ENCODE measurements at regions of chr2 and their contacts with region 1.

Region 1: DNA sequence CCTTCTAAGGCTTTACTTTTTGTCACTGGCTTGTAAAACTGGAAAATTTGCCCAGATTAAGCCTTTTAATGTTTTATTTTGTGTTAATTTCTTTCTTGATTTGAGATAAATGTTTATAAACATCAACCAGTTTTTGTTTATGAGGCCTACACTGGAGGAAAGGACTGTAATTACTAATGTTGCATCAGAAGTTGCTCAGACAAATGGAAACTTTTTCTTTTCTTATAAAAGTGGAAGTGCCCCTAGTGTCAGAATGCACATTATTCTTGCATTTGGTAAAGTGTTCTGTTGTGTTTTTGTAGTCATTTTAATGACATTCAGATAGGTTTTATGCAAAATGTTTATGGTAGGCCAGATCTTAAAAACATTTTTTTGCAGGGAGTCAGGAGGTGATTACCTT is 25.3 kb downstream of the LCLAT1 start:
- DNase-seq: no peak
- ATAC-seq: no peak
- H3K4me3 ChIP-seq: no peak overlapping the region
- H3K27ac ChIP-seq: no peak overlapping the region
- H3K4me1 ChIP-seq: peaks cover 0 to 9% of the 10 kb centered on the region in 2 donors
- H3K27me3 ChIP-seq: no peaks in the 10 kb centered on the region
- CTCF ChIP-seq: no peak
- POLR2A ChIP-seq: no peak

Region 2: DNA sequence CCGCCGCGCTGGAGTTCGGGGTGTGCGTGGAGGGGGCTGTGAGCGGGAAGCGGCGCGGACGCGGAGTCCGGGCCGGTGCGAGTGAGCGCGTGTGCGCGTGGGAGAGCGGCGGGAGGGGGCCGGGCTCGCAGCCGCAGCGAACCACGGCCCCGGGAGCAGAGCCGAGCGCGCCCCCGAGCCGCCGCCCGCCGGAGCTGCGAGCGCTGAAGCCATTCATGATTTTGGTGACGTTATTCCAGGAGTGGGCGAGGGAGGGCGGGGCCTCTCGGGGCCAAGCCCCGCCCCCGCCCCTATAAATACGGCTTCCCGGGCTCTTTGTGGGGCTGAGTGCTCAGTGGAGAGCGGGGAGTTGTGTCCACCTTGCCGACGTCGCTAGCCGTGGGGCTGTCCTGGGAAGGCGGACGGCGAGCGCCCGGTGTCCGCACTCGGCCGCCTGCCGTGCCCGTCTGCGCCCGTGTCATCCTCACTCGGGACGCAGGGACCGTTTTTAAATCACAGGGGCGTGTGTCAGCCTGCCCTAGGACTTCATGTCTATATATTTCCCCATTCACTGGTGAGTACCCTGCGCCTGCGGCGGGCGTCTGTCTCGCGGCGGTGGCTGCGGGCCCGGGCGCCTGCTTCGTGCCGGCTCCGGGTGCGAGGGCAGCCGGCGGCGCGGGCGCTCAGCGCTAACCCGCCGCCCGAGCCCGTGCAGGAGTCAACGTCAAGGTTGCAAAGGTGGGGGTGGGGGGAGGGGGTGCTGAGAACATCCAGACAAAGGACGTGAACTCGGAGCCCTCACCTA is 240.9 kb before region 1 on chr2 and contains the start of gene LBH:
- in situ Hi-C with region 1: loop called in 1 of 4 experiments (anchors 25 kb)
- intact Hi-C with region 1: no loop called
- DNase-seq: peak; percentile 31 to 64
- ATAC-seq: peak; percentile 69 to 70
- H3K4me3 ChIP-seq: peak within 1 kb of the TSS; percentile 58 to 82 (median 71)
- H3K27ac ChIP-seq: peak within 1 kb of the TSS; percentile 63 to 77 (median 72)
- H3K4me1 ChIP-seq: peaks cover 6 to 18% of the 10 kb centered on the region in 2 donors
- H3K27me3 ChIP-seq: peaks cover 15 to 43% (median 32%) of the 10 kb centered on the region in 3 donors
- CTCF ChIP-seq: peak in 1 of 5 experiments; percentile 10
- POLR2A ChIP-seq: peak; percentile 80 to 94
- total RNA-seq, gene LBH: 5.4 to 37.6 (median 12.5) TPM

Region 3: GRCh38 chr2:30300456-30301221 is 171.7 kb before region 1 on chr2:
- in situ Hi-C with region 1: no loop called
- intact Hi-C with region 1: no loop called
- DNase-seq: no peak
- ATAC-seq: peak in 1 of 2 donors; percentile 42
- H3K4me3 ChIP-seq: no peak overlapping the region
- H3K27ac ChIP-seq: no peak overlapping the region
- H3K4me1 ChIP-seq: no peaks in the 10 kb centered on the region
- H3K27me3 ChIP-seq: no peaks in the 10 kb centered on the region
- CTCF ChIP-seq: no peak
- POLR2A ChIP-seq: no peak

Region 4: GRCh38 chr2:30455114-30455738 is 17.1 kb before region 1 on chr2:
- in situ Hi-C with region 1: no loop called
- intact Hi-C with region 1: no loop called
- DNase-seq: no peak
- ATAC-seq: no peak
- H3K4me3 ChIP-seq: no peak overlapping the region
- H3K27ac ChIP-seq: no peak overlapping the region
- H3K4me1 ChIP-seq: peaks cover 0 to 16% of the 10 kb centered on the region in 2 donors
- H3K27me3 ChIP-seq: no peaks in the 10 kb centered on the region
- CTCF ChIP-seq: no peak
- POLR2A ChIP-seq: no peak